HEK293 (cell line): ENCODE measurements at regions of chr2 and their contacts with region 1.

Region 1: DNA sequence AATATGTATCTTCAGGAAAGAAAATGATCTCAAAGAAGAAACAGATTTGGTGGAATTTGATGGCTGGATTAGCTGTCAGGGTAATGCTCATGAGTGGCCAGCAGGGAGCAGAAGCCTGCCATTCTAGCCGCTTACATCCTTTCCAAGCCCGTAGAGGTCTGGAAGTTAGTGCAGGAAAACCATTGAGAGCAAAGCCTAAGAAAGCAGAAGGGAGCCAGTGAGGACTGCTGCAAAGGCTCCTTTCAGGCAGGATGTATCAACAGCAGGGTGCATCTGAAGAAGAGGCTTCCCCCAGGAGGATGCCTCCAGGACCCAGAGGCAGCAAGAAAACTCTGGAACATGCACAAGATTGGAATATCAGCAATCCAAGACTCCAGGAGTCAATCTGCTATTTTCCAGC is 22.9 kb upstream of the LBH start:
- H3K4me3 ChIP-seq: no peak overlapping the region
- H3K27ac ChIP-seq: no peak overlapping the region
- H3K4me1 ChIP-seq: no peaks in the 10 kb centered on the region
- CTCF ChIP-seq: peak; percentile 55; the same call in 1 of the 2 replicates

Region 2: GRCh38 chr2:30068067-30068466 is 140.4 kb before region 1 on chr2:
- CTCF ChIA-PET with region 1: no interaction called
- POLR2A ChIA-PET with region 1: no interaction called
- H3K4me3 ChIP-seq: no peak overlapping the region
- H3K27ac ChIP-seq: no peak overlapping the region
- H3K4me1 ChIP-seq: no peaks in the 10 kb centered on the region
- CTCF ChIP-seq: no peak

Region 3: GRCh38 chr2:30334762-30335363 is 126.4 kb after region 1 on chr2:
- CTCF ChIA-PET with region 1: interaction called, 12 read pairs
- POLR2A ChIA-PET with region 1: no interaction called
- H3K4me3 ChIP-seq: no peak overlapping the region
- H3K27ac ChIP-seq: no peak overlapping the region
- H3K4me1 ChIP-seq: no peaks in the 10 kb centered on the region
- CTCF ChIP-seq: no peak